Naive thymus-derived CD4-positive, alpha-beta T cell (primary cell): ENCODE measurements at regions of chr1 and their contacts with region 1.

Region 1: GRCh38 chr1:15578921-15579682 is 5.7 kb downstream of the AGMAT start:
- DNase-seq: peak in 8 of 9 donors; percentile 32 to 83 (median 76)
- ATAC-seq: peak; percentile 89
- H3K4me3 ChIP-seq: peak overlapping the region; percentile 33
- H3K4me3 Mint-ChIP-seq: peak overlapping the region; percentile 51 to 83 (median 76)
- H3K27ac ChIP-seq: peak overlapping the region; percentile 75
- H3K27ac Mint-ChIP-seq: peak overlapping the region; percentile 91 to 99 (median 96)
- H3K4me1 ChIP-seq: peaks cover 27 to 58% of the 10 kb centered on the region in 2 donors
- H3K4me1 Mint-ChIP-seq: peaks cover 29 to 62% (median 46%) of the 10 kb centered on the region in 7 donors
- H3K27me3 ChIP-seq: no peaks in the 10 kb centered on the region
- H3K27me3 Mint-ChIP-seq: no peaks in the 10 kb centered on the region

Region 2: GRCh38 chr1:15603050-15603965 is 24.2 kb after region 1 on chr1:
- CTCF ChIA-PET with region 1: no interaction called
- POLR2A ChIA-PET with region 1: interaction called, 10 read pairs
- intact Hi-C with region 1: loop called (anchors 1 kb)
- DNase-seq: peak; percentile 80 to 95 (median 90)
- ATAC-seq: peak; percentile 99
- H3K4me3 ChIP-seq: peak overlapping the region; percentile 88
- H3K4me3 Mint-ChIP-seq: peak overlapping the region; percentile 73 to 95 (median 82)
- H3K27ac ChIP-seq: peak overlapping the region; percentile 68
- H3K27ac Mint-ChIP-seq: peak overlapping the region; percentile 57 to 94 (median 81)
- H3K4me1 ChIP-seq: peaks cover 9 to 11% of the 10 kb centered on the region in 2 donors
- H3K4me1 Mint-ChIP-seq: peaks cover 0 to 14% (median 12%) of the 10 kb centered on the region in 7 donors
- H3K27me3 ChIP-seq: no peaks in the 10 kb centered on the region
- H3K27me3 Mint-ChIP-seq: peaks cover 0 to 13% (median 0%) of the 10 kb centered on the region in 5 donors

Region 3: DNA sequence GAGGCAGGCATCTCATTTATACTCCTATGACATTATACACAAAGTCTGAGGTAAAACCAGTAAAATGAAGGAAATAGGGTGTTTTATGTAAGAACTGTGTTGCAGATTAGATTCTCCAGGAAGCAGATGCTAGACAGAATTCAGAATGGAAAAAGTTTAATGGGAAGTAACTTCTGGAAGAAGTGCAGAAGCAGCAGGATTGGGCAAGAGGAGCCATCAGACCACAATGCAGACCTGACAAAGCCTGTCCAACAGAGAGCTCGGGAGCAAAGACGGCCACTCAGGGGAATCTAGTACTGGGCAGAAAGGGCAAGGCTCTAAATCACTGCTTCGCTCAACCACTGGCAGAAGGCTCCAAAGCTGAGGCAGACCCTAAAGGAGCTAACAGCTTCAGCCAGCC is 739.5 kb after region 1 on chr1:
- CTCF ChIA-PET with region 1: no interaction called
- POLR2A ChIA-PET with region 1: no interaction called
- intact Hi-C with region 1: no loop called
- DNase-seq: no peak
- ATAC-seq: no peak
- H3K4me3 ChIP-seq: no peak overlapping the region
- H3K4me3 Mint-ChIP-seq: no peak overlapping the region
- H3K27ac ChIP-seq: no peak overlapping the region
- H3K27ac Mint-ChIP-seq: peak overlapping the region in 1 of 9 donors; percentile 12
- H3K4me1 ChIP-seq: no peaks in the 10 kb centered on the region
- H3K4me1 Mint-ChIP-seq: peaks cover 4 to 38% (median 25%) of the 10 kb centered on the region in 7 donors
- H3K27me3 ChIP-seq: no peaks in the 10 kb centered on the region
- H3K27me3 Mint-ChIP-seq: no peaks in the 10 kb centered on the region